ENCODE measurements at regions of chr1 and their contacts with region 1.

Region 1: GRCh38 chr1:61301824-61302657 is 219.7 kb downstream of the NFIA start:
- DNase-seq: peak; percentile 46
- ATAC-seq: peak; percentile 90
- H3K4me3 Mint-ChIP-seq: no peak overlapping the region
- H3K27ac Mint-ChIP-seq: peak overlapping the region; percentile 92
- H3K4me1 Mint-ChIP-seq: peaks cover 28% of the 10 kb centered on the region
- H3K27me3 Mint-ChIP-seq: peaks cover 3% of the 10 kb centered on the region

Region 2: GRCh38 chr1:61332196-61332753 is 30.2 kb after region 1 on chr1:
- CTCF ChIA-PET with region 1: interaction called, 8 read pairs
- POLR2A ChIA-PET with region 1: interaction called, 23 read pairs
- intact Hi-C with region 1: loop called (anchors 1 to 2 kb)
- DNase-seq: peak; percentile 40
- ATAC-seq: peak; percentile 94
- H3K4me3 Mint-ChIP-seq: no peak overlapping the region
- H3K27ac Mint-ChIP-seq: peak overlapping the region; percentile 48
- H3K4me1 Mint-ChIP-seq: peaks cover 21% of the 10 kb centered on the region
- H3K27me3 Mint-ChIP-seq: peaks cover 5% of the 10 kb centered on the region

Measured in activated CD4-positive, alpha-beta T cell treated with anti-CD3 and anti-CD28 coated beads for 36 hours (primary cell).